ENCODE measurements at regions of chr9 and their contacts with region 1.

Region 1: GRCh38 chr9:130663258-130663976 is 977 bp upstream of the PRDM12 start:
- DNase-seq: no peak
- H3K4me3 Mint-ChIP-seq: no peak overlapping the region
- H3K27ac Mint-ChIP-seq: peak overlapping the region; percentile 74
- H3K4me1 Mint-ChIP-seq: no peaks in the 10 kb centered on the region
- H3K27me3 Mint-ChIP-seq: peaks cover 63% of the 10 kb centered on the region

Region 2: DNA sequence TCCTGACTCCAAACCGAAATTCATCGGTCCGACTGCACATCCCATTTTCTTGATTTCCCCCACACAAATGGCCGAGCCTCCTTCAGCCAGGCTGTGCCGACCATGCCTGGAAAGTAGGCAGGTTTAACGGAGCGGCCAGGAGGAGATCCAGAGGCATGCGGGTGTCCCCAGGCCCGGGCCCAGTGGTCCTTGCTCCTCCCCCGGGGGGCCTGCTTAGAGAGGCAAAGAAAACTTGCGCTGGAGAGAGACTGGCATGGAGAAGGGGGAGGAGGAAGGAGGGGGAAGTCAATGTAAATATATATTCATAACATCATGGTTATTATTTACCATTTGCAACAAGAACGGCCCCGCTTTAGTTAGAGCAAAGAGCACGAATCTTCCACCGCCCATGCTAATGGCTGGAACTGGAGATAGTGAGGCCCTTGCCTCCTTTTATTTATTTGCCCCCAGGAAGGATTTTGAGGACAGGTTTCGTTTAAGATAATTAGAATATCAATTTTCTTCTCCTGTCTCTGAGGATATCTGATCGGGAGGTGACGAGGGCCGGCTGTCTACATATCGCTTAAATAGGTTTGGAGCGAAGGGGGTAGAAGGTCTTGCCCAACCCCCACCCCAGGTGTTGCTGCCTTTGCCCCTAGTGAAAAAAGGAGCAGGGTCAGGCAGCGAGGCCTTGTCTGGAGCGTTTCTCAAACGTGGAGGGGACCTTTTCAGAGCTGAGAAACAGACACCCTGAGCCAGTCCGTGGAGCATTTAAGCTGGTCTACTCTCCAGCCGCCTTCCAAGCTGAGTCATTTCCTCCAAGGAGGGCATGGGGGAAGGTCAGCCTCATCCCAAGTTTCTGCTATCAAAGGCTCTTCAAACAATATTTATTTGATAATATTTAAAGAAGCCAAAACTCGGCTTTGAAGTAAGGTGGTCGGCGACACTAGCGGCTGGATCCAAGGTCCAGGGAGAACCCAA is 1921.5 kb after region 1 on chr9:
- intact Hi-C with region 1: loop called (anchors 5 kb)
- DNase-seq: no peak
- H3K4me3 Mint-ChIP-seq: no peak overlapping the region
- H3K27ac Mint-ChIP-seq: no peak overlapping the region
- H3K4me1 Mint-ChIP-seq: peaks cover 8% of the 10 kb centered on the region
- H3K27me3 Mint-ChIP-seq: peaks cover 72% of the 10 kb centered on the region

Measured in activated T-helper 1 cell treated with anti-CD3 and anti-CD28 coated beads, Interleukin-12 subunit alpha, Interleukin-12 subunit beta, Interleukin-2, Interleukin-4 antibody, amounts not matched to agents 30 ng/mL and 10 ng/mL and 1 ng/mL, durations not matched to agents 14 hours and 24 hours and 36 hours (primary cell).